Ovary (tissue), 10 donors: ENCODE measurements at regions of chr3 and their contacts with region 1.

Region 1: DNA sequence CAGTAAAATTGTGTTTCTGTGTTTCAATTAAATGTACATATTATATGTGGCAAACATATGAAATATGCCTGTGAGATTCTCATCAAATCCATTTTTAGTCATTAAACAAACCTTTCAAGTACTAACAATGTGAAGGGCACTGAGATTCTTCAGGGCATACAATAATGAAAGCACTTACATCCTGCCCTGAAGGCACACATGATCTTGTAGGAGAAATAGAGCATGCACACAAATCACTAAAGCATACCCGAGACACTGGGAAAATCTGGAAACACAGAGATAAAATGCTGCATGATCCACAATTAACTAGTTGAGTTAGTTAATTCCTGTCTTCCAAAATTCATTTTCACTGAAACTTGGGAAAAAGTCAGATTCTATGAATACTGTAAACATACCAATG is 810.5 kb upstream of the NECTIN3 start:
- DNase-seq: no peak
- H3K4me3 ChIP-seq: no peak overlapping the region
- H3K27ac ChIP-seq: no peak overlapping the region
- H3K4me1 ChIP-seq: peaks cover 6% of the 10 kb centered on the region
- H3K27me3 ChIP-seq: no peaks in the 10 kb centered on the region
- CTCF ChIP-seq: no peak
- EP300 ChIP-seq: no peak
- POLR2A ChIP-seq: no peak

Region 2: DNA sequence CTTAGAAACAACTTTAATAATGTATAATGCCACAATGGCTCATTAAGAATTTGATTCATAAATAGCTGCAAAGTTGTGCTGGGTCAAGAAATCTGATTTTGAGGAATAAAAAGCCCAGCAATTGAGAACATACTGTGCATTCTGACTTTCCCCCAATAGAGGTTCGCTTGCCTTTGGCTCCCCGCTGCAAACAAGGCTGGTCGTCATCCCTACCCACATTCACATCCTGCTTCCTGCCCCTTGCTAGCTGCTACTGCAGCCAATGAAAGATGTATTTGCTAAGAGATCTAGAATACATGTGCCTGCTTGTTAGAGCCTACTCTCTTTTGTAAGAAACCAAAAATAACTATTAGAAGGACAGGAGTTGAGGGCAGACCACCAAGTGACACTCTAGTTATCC is 1255.7 kb before region 1 on chr3:
- intact Hi-C with region 1: loop called in 1 of 4 experiments (anchors 5 kb)
- DNase-seq: no peak
- H3K4me3 ChIP-seq: no peak overlapping the region
- H3K27ac ChIP-seq: no peak overlapping the region
- H3K4me1 ChIP-seq: no peaks in the 10 kb centered on the region
- H3K27me3 ChIP-seq: no peaks in the 10 kb centered on the region
- CTCF ChIP-seq: no peak
- EP300 ChIP-seq: no peak
- POLR2A ChIP-seq: no peak

Region 3: DNA sequence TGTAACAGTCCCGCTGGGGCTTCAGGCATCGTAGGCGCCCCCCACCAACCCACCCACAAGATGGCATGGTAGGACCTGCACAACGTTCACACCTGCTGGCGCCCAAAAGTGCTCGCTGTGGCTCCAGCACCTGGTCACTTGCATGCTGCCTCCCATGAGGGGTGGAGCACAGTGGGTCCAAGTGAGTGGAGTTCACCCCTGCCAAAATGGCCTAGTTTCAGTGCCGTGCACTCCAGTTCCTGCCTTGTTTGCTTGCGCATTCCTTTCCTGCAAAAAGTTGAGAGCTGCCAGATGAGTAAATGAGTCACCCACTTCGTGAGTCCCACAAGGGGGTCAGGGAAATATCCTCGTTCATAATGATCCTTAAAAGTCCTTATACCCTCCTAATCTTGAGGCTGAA is 135.1 kb before region 1 on chr3:
- intact Hi-C with region 1: no loop called
- DNase-seq: no peak
- H3K4me3 ChIP-seq: no peak overlapping the region
- H3K27ac ChIP-seq: no peak overlapping the region
- H3K4me1 ChIP-seq: no peaks in the 10 kb centered on the region
- H3K27me3 ChIP-seq: no peaks in the 10 kb centered on the region
- CTCF ChIP-seq: no peak
- EP300 ChIP-seq: no peak
- POLR2A ChIP-seq: no peak